ENCODE measurements at regions of chr3 and their contacts with region 1.

Region 1: GRCh38 chr3:112341381-112341780 is 8.4 kb downstream of the CD200 start:
- H3K4me3 Mint-ChIP-seq: no peak overlapping the region
- H3K27ac Mint-ChIP-seq: no peak overlapping the region
- H3K4me1 Mint-ChIP-seq: peaks cover 5% of the 10 kb centered on the region
- H3K27me3 Mint-ChIP-seq: no peaks in the 10 kb centered on the region

Region 2: GRCh38 chr3:112425858-112426750 is 84.7 kb after region 1 on chr3:
- intact Hi-C with region 1: loop called (anchors 5 kb)
- H3K4me3 Mint-ChIP-seq: no peak overlapping the region
- H3K27ac Mint-ChIP-seq: no peak overlapping the region
- H3K4me1 Mint-ChIP-seq: peaks cover 28% of the 10 kb centered on the region
- H3K27me3 Mint-ChIP-seq: no peaks in the 10 kb centered on the region

Measured in dendritic cell treated with granulocyte-macrophage colony-stimulating factor and Interleukin-4, amounts not matched to agents 40 ng/mL and 50 ng/mL, for 4 days (primary cell).